ENCODE measurements at regions of chr1 and their contacts with region 1.

Region 1: DNA sequence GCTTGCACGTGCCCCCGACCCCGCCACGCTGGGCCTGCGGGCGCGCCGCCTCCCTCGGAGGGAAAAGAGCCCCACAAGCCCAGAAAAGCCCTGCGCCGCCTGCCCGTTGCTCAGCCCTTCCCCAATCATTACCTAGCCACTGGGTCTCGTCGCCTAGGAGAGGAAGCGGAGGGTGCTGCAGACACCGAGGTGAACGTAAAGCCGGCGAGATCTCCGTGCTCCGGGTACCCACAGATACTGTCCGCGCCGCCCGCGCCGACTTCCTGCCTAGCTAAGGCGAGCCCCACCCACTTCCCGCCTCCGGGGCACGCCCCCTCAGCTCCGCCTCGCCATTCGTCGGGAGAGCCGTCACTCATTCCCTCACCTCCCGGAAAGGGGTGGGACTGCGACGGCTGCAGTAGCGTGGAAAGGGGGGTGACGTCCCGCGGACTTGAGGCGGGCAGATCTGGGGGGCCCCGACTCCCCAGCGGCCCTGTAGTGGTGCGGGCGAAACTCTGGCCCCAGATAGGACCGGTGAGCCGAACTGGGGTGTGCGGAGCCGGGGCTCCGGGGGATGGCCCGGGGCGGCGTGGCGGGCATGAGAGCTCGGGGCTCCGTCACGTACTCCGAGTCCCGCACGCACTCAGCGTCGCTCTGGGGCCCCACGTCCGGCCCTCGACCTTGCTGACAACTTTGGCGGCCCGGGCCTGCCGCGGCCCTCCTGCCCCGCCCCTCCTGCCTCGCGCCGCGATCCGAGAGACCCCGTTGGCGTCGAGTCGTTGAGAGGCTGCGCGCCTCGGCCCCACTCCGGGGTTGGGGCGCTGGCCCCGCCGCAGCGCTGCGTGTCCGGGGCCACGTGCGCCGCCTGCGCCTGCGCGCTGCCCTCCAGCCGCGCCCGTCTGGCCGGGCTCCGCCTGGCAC is at the start of gene ENO1:
- DNase-seq: peak; percentile 97
- H3K4me3 Mint-ChIP-seq: peak within 1 kb of the TSS; percentile 96
- H3K27ac Mint-ChIP-seq: peak within 1 kb of the TSS; percentile 98
- H3K4me1 Mint-ChIP-seq: peaks cover 44% of the 10 kb centered on the region
- H3K27me3 Mint-ChIP-seq: no peaks in the 10 kb centered on the region
- total RNA-seq, gene ENO1: 1,608 to 1,874 TPM

Region 2: DNA sequence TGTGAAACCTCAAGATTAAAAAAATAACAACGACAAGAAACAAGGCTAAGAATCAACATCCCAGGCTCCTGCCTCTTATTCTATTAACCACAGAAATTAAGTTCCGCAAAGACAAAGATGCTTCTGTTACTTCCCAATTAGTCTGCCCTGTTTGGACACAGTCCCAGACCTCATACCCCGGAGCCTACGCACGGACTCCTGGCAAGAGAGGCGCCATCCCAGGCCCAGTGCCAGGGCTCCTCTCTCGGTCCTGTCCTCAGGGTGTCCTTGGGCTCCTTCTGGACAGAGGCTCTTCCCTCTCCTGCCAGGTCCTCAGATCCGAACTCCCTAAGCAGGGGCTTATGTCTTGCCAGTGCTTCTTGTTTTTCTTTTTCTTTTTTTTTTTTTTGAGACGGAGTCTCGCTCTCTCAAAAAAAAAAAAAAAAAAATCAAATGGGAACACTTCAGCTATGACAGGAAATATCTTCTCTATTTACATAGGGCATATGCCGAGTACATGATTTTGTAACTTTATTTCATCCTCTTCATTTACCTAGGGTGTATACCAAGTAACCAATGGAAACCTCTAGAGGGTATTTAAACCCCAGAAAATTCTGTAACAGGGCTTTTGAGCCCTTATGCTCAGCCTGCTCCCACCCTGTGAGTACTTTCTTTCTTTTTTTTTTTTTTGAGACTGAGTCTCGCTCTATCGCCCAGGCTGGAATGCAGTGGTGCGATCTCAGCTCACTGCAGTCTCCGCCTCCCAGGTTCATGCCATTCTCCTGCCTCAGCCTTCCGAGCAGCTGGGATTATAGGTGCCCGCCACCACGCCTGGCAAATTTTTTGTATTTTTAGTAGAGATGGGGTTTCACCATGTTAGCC is 11.5 kb after region 1 on chr1:
- CTCF ChIA-PET with region 1: interaction called, 29 read pairs
- POLR2A ChIA-PET with region 1: interaction called, 5 read pairs
- DNase-seq: no peak
- H3K4me3 Mint-ChIP-seq: no peak overlapping the region
- H3K27ac Mint-ChIP-seq: peak overlapping the region; percentile 36
- H3K4me1 Mint-ChIP-seq: peaks cover 8% of the 10 kb centered on the region
- H3K27me3 Mint-ChIP-seq: no peaks in the 10 kb centered on the region

Measured in activated CD4-positive, alpha-beta T cell treated with anti-CD3 and anti-CD28 coated beads, Interleukin-2, amount 10 ng/mL, durations not matched to agents 7 days and 5 days (primary cell).